ENCODE measurements at regions of chr21 and their contacts with region 1.

Region 1: GRCh38 chr21:45554477-45555175 is 12.4 kb upstream of the SLC19A1 start:
- DNase-seq: no peak
- H3K4me3 ChIP-seq: peak overlapping the region; percentile 68
- CTCF ChIP-seq: peak; percentile 94

Region 2: GRCh38 chr21:45404730-45405270 is 149.8 kb before region 1 on chr21 and contains the start of gene COL18A1:
- CTCF ChIA-PET with region 1: no interaction called
- POLR2A ChIA-PET with region 1: no interaction called
- DNase-seq: no peak
- H3K4me3 ChIP-seq: peak within 1 kb of the TSS; percentile 60
- CTCF ChIP-seq: no peak

Region 3: GRCh38 chr21:45570826-45571601 is 16.4 kb after region 1 on chr21:
- CTCF ChIA-PET with region 1: interaction called, 57 read pairs
- POLR2A ChIA-PET with region 1: no interaction called
- DNase-seq: peak; percentile 50
- H3K4me3 ChIP-seq: no peak overlapping the region
- CTCF ChIP-seq: no peak

Region 4: DNA sequence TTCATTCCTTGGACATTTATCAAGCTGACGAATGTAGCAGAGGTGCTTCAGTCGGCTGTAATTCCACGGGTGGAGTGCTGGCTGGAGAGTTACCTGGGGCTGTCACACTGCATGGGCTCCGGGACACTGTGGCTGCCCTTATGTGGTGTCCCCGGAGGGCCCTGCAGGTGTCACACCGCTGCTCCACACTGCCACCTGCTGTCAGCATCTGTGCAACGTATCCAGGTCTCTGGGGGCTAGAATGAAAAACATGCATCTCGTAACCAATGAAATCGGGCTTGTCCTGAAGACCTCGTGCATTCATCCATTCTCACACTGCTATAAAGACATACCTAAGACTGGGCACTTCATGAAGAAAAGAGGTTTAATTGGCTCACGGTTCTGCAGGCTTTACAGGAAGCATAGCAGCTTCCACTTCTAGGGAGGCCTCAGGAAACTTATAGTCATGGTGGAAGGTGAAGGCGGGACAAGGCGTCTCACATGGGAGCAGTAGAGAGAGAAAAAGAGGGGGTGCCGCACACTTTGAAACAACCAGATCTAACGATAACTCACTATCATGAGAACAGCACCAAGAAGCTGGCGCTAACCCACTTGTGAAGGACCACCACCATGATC is 42.2 kb after region 1 on chr21:
- CTCF ChIA-PET with region 1: interaction called, 102 read pairs
- POLR2A ChIA-PET with region 1: no interaction called
- DNase-seq: no peak
- H3K4me3 ChIP-seq: no peak overlapping the region
- CTCF ChIP-seq: peak; percentile 89

Region 5: GRCh38 chr21:45820171-45821091 is 265.8 kb after region 1 on chr21:
- CTCF ChIA-PET with region 1: interaction called, 164 read pairs
- POLR2A ChIA-PET with region 1: no interaction called
- DNase-seq: peak; percentile 50
- H3K4me3 ChIP-seq: no peak overlapping the region
- CTCF ChIP-seq: peak; percentile 87

Region 6: GRCh38 chr21:45846373-45847160 is 291.9 kb after region 1 on chr21:
- CTCF ChIA-PET with region 1: interaction called, 11 read pairs
- POLR2A ChIA-PET with region 1: no interaction called
- DNase-seq: no peak
- H3K4me3 ChIP-seq: no peak overlapping the region
- CTCF ChIP-seq: no peak

Region 7: GRCh38 chr21:45923146-45923545 is 368.5 kb after region 1 on chr21:
- CTCF ChIA-PET with region 1: interaction called, 21 read pairs
- POLR2A ChIA-PET with region 1: no interaction called
- DNase-seq: peak; percentile 1
- H3K4me3 ChIP-seq: no peak overlapping the region
- CTCF ChIP-seq: peak; percentile 95

Measured in AG04449 (cell line).